Activated naive CD4-positive, alpha-beta T cell treated with anti-CD3 and anti-CD28 coated beads for 36 hours (primary cell): ENCODE measurements at regions of chr1 and their contacts with region 1.

Region 1: DNA sequence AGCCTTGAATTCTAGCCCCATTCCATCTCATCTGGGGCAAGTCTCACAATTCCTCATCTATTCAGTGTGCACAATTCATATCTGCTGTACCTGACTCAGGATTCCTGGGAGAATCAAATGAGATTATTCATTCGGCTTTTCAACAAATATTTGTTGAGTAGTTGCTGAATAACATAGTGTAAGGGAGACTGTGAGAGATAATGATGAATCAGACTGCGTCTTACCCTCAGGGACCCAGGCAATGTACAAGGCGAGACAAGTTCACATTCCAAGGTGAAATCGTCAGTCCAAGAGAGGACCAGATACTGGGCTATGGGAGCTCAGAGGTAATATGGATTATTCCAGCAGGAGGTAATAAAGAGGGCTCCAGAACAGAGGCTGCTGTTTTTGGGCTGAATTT is 67.8 kb upstream of the SMYD2 start:
- DNase-seq: no peak
- H3K4me3 Mint-ChIP-seq: no peak overlapping the region
- H3K27ac Mint-ChIP-seq: no peak overlapping the region
- H3K4me1 Mint-ChIP-seq: peaks cover 3% of the 10 kb centered on the region
- H3K27me3 Mint-ChIP-seq: peaks cover 2% of the 10 kb centered on the region

Region 2: GRCh38 chr1:214018386-214019268 is 194.5 kb before region 1 on chr1:
- CTCF ChIA-PET with region 1: no interaction called
- intact Hi-C with region 1: no loop called
- DNase-seq: peak; percentile 27
- H3K4me3 Mint-ChIP-seq: no peak overlapping the region
- H3K27ac Mint-ChIP-seq: no peak overlapping the region
- H3K4me1 Mint-ChIP-seq: peaks cover 9% of the 10 kb centered on the region
- H3K27me3 Mint-ChIP-seq: no peaks in the 10 kb centered on the region

Region 3: DNA sequence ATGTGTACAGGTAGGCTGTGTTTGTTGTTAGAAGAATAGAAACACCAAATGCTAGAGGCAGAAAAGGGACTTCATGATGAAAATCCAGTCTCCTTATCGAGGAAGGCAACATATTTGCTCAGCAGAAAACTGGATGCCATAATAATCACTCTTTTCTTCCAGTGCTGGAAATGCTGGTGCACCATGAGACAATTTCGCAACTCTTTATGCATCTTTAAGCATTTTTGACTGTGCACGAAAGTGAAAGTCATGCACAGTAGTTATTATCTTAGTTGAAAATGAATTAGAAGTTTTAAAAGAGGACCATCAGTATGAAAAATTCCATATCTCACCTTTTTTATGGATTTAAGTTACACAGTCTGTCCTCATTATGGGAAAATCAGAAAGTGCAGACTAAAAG is 96.9 kb after region 1 on chr1:
- CTCF ChIA-PET with region 1: no interaction called
- intact Hi-C with region 1: loop called (anchors 5 kb)
- DNase-seq: peak; percentile 12
- H3K4me3 Mint-ChIP-seq: no peak overlapping the region
- H3K27ac Mint-ChIP-seq: no peak overlapping the region
- H3K4me1 Mint-ChIP-seq: peaks cover 30% of the 10 kb centered on the region
- H3K27me3 Mint-ChIP-seq: no peaks in the 10 kb centered on the region

Region 4: DNA sequence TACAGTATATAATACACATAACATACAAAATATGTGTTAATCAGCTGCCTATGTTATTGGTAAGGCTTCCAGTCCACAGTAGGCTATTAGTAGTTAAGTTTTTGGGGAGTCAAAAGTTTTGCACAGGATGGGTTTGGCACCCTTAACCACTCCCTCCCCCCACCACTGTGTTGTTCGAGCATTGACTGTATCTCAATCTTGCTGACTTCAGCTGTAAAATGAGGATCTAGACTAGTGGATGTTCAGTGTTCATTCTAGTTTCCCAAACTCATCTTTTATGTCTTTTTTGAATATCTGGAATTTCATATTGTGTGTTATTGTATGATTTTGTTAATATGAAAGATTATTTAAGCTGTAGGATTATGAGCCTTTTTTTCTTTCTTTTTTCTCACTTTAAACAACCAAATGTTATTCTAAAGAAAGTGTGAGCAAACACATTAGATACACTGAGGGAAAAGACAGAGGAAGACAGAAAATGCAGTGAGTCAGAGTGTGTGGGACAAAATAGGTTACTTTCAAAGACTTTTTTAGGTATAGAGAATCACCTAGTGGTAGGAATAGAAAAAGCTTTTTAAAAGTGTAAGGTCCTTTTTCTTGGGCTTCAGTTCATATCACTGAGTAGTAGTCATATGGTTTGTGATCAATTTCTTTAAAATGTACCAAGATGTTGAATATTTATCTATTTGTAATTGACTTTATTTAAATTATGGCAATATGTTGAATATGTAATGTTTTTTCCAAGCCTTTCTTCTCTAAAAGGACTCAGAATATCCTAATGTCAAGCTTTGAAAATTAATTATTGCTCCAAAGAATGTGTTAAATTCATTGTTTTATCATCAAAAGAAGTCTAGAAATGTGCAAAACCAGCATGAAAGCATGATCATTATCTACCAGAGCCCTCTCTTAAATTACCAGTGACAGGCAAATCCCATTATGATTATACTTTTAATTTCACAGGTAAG is 371.9 kb after region 1 on chr1:
- CTCF ChIA-PET with region 1: interaction called, 8 read pairs
- intact Hi-C with region 1: loop called (anchors 1 kb)
- DNase-seq: no peak
- H3K4me3 Mint-ChIP-seq: no peak overlapping the region
- H3K27ac Mint-ChIP-seq: no peak overlapping the region
- H3K4me1 Mint-ChIP-seq: peaks cover 2% of the 10 kb centered on the region
- H3K27me3 Mint-ChIP-seq: no peaks in the 10 kb centered on the region

Region 5: GRCh38 chr1:215146341-215146826 is 933.2 kb after region 1 on chr1:
- CTCF ChIA-PET with region 1: no interaction called
- intact Hi-C with region 1: loop called (anchors 5 kb)
- DNase-seq: peak; percentile 36
- H3K4me3 Mint-ChIP-seq: no peak overlapping the region
- H3K27ac Mint-ChIP-seq: no peak overlapping the region
- H3K4me1 Mint-ChIP-seq: peaks cover 3% of the 10 kb centered on the region
- H3K27me3 Mint-ChIP-seq: no peaks in the 10 kb centered on the region